ENCODE measurements at regions of chr1 and their contacts with region 1.

Region 1: DNA sequence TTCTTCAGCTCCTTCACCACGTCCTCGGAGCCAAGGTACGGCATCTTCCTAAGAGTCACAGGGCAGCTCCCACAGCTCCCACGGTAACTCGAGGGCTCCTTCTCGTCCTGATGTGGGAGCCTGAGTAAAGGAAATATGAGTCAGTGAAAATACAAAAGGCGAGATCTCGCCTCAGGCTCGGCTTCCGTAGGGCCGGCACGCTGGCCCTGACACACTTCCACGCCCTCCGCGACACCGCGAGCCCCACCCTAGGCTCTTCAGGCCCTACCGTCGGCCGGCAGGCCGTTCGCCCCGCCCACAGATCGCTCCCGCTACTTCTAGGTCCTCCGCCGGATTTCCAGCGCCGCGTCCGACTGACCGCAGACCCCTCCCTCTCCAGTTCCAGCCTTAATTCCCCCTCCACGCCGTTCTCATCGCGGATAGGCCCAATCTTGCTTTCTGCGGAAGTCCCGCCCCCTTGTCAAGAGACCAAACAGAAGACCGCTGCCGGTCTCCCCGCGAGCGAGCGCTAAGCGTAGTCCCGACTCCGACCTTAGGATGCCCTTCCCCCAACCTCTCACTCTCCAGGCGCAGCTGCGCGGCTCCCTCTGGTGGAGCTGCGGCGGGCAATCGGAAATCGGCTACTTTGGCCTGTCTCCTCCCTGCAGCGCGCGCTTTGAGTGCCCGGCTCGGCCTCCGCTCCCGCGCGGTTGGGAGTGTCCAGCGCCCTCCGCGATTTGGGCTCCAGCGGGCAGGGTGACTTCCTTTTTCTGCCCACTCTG is at the starts of genes AP4B1 and DCLRE1B:
- DNase-seq: peak; percentile 100
- H3K4me3 ChIP-seq: peak within 1 kb of the TSS; percentile 64 to 90 (median 82)
- H3K27ac ChIP-seq: peak within 1 kb of the TSS; percentile 87 to 98 (median 92)
- H3K4me1 ChIP-seq: peaks cover 12 to 86% (median 50%) of the 10 kb centered on the region in 6 donors
- H3K27me3 ChIP-seq: no peaks in the 10 kb centered on the region
- CTCF ChIP-seq: peak; percentile 53 to 97 (median 89)
- POLR2A ChIP-seq: peak in 1 of 3 donors; percentile 55
- total RNA-seq, gene AP4B1: 23.9 to 58.0 (median 33.1) TPM
- total RNA-seq, gene DCLRE1B: 6.7 to 10.5 (median 8.0) TPM

Region 2: GRCh38 chr1:113835642-113836307 is 69.1 kb before region 1 on chr1:
- intact Hi-C with region 1: loop called (anchors 10 kb)
- DNase-seq: no peak
- H3K4me3 ChIP-seq: no peak overlapping the region
- H3K27ac ChIP-seq: peak overlapping the region in 1 of 8 donors; percentile 2
- H3K4me1 ChIP-seq: peaks cover 0 to 23% (median 9%) of the 10 kb centered on the region in 6 donors
- H3K27me3 ChIP-seq: no peaks in the 10 kb centered on the region
- CTCF ChIP-seq: peak in 10 of 11 experiments; percentile 44 to 72 (median 61)
- POLR2A ChIP-seq: no peak